Calu3 (cell line): ENCODE measurements at regions of chr10 and their contacts with region 1.

Region 1: DNA sequence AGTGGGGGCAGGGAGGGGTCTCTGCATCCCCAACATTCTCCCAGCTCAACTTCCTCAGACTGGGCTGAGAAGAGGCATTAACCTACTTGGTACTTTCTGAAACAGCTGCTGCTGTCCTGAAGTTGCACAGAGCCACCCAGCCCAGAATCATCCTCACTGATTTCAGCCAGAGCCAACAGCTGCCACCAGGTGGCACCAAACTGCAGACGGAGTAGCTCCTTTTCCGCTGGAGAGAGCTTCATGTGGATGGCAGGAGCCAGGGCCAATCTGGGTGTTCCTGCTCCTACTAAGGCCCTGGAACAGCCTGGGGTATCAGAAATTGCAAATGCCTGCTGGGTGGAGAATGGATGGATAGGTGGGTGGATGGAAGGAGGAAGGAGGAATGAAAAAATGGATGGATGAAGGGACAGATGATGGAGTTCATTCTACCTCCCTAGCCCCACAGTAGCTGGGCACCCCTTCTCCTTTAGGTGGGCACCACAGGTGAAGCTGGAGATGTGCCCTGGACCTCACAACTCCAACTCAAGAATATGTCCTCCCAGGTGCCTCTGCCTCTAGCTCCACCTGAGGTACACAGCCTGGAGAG is 11.8 kb upstream of the DRGX start:
- DNase-seq: peak; percentile 85
- H3K4me3 Mint-ChIP-seq: no peak overlapping the region
- H3K27ac Mint-ChIP-seq: no peak overlapping the region
- H3K4me1 Mint-ChIP-seq: no peaks in the 10 kb centered on the region
- H3K27me3 Mint-ChIP-seq: peaks cover 96% of the 10 kb centered on the region
- CTCF ChIP-seq: peak; percentile 87

Region 2: GRCh38 chr10:49518982-49519578 is 111.4 kb after region 1 on chr10:
- CTCF ChIA-PET with region 1: interaction called, 31 read pairs
- intact Hi-C with region 1: loop called (anchors 1 kb)
- DNase-seq: peak; percentile 43
- H3K4me3 Mint-ChIP-seq: no peak overlapping the region
- H3K27ac Mint-ChIP-seq: no peak overlapping the region
- H3K4me1 Mint-ChIP-seq: no peaks in the 10 kb centered on the region
- H3K27me3 Mint-ChIP-seq: no peaks in the 10 kb centered on the region
- CTCF ChIP-seq: peak; percentile 61